ENCODE measurements at regions of chr3 and their contacts with region 1.

Region 1: GRCh38 chr3:195555110-195555509 is 12.0 kb upstream of the PPP1R2 start:
- DNase-seq: no peak
- CTCF ChIP-seq: no peak

Region 2: DNA sequence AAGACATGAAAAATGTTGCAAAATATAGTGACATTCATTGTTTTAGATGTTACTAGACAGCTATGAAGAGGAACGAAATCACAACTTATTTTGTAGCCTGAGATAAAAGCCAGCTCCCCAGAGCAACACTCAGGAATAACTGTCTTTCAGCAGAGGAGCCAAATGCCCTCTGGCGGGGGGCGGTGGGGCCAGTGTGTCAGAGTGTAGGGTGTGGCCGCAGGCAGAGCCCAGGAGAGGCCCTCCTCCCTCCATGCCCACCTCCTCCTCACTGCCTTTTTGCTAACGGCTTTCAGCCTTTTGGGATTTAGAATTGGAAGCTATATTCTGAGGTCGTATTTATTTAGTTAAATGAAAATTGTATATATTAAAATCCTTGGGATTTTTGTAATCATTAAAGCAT is 11.7 kb after region 1 on chr3:
- CTCF ChIA-PET with region 1: interaction called, 10 read pairs
- POLR2A ChIA-PET with region 1: no interaction called
- DNase-seq: no peak
- CTCF ChIP-seq: no peak

Measured in GM10248 (cell line).